Sciatic nerve (tissue), 2 donors: ENCODE measurements at regions of chrX and their contacts with region 1.

Region 1: GRCh38 chrX:43958529-43958928 is 14.7 kb downstream of the NDP start:
- DNase-seq: no peak
- ATAC-seq: peak; percentile 89

Region 2: GRCh38 chrX:42976729-42977366 is 981.7 kb before region 1 on chrX:
- intact Hi-C with region 1: no loop called
- DNase-seq: no peak
- ATAC-seq: no peak

Region 3: DNA sequence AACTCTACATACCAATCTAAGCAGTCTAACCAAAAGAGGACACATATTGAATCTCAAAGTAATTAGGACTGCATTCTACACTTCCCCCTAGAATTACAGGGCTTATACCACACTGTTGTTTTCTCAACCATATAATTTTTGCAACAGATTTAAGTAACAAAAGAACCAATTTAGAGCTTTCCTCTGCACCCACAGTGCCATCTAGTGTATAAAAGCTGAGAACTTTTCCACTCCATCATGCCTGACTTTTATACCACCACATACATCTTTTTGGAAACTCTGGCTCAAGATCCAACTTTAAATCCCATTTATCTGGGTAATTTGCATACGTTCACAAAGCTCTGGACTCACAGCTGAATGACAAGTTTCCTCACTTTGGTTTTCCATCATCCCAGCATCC is 285.5 kb after region 1 on chrX:
- intact Hi-C with region 1: loop called (anchors 10 kb)
- DNase-seq: no peak
- ATAC-seq: peak; percentile 49